ENCODE measurements at regions of chr14 and their contacts with region 1.

Region 1: GRCh38 chr14:21723431-21724045 is 49.9 kb upstream of the OR4E1 start:
- H3K4me3 ChIP-seq: no peak overlapping the region
- H3K27ac ChIP-seq: no peak overlapping the region
- H3K4me1 ChIP-seq: no peaks in the 10 kb centered on the region
- CTCF ChIP-seq: peak; percentile 43

Region 2: GRCh38 chr14:21643407-21643806 is 80.1 kb before region 1 on chr14:
- CTCF ChIA-PET with region 1: interaction called, 15 read pairs
- POLR2A ChIA-PET with region 1: no interaction called
- H3K4me3 ChIP-seq: no peak overlapping the region
- H3K27ac ChIP-seq: no peak overlapping the region
- H3K4me1 ChIP-seq: no peaks in the 10 kb centered on the region
- CTCF ChIP-seq: no peak

Region 3: DNA sequence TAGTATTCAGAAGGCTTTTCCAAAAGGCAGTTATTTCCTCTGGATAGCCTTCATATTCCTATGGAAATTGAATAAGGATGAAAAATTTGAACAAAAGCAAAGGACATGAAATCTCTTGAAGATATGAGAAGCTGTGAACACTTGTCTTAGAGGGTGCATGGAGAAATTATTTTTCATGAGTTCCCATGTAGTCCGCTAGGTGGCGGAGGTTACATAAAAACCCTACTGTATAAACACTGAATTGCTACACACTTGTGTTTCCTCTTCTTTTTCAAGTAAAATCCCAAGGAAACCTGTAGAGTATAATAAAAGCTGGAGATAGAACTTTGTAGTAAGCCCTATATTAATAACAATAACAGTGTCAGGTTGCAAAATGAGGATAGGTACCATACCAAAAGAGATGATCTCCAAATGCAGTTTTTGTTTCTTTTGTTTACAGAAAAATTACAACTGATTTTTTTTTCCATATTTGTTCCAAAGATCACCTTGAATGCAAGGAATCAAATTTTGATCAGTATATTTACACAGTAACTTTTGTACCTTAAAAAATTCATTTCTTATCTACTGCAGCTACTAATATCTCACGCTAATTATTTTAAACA is 12.1 kb before region 1 on chr14:
- CTCF ChIA-PET with region 1: interaction called, 23 read pairs
- POLR2A ChIA-PET with region 1: interaction called, 3 read pairs
- H3K4me3 ChIP-seq: no peak overlapping the region
- H3K27ac ChIP-seq: no peak overlapping the region
- H3K4me1 ChIP-seq: no peaks in the 10 kb centered on the region
- CTCF ChIP-seq: no peak

Region 4: DNA sequence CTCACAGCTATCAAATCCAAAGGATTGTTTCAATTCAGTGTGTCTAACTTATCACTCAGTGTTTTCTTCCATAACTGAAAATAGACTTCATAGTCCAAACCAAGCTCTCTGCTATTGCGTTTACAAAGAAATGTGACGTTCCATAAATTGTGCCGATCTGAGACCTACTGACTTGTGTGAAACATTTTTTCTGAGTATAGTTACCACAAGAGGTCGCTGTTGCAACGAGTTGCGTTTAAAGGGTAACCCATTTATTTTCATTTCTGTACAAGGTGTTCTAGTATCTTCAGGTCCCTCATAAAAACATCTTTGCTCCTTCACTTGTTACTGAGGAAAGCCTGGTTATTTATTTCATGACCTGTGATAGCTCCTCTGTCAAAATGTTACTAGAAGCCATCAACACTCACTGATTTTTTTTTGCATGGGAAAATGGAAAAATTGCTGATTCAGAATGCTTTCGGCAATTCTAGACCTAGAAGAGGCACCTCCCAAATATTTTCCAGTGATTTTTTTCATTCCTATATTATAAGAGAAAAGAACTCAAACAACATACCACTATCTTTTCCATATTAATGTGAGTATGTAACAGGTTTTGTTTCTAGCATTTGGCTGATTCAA is 11.0 kb after region 1 on chr14:
- CTCF ChIA-PET with region 1: interaction called, 76 read pairs
- POLR2A ChIA-PET with region 1: no interaction called
- H3K4me3 ChIP-seq: no peak overlapping the region
- H3K27ac ChIP-seq: no peak overlapping the region
- H3K4me1 ChIP-seq: no peaks in the 10 kb centered on the region
- CTCF ChIP-seq: no peak

Region 5: DNA sequence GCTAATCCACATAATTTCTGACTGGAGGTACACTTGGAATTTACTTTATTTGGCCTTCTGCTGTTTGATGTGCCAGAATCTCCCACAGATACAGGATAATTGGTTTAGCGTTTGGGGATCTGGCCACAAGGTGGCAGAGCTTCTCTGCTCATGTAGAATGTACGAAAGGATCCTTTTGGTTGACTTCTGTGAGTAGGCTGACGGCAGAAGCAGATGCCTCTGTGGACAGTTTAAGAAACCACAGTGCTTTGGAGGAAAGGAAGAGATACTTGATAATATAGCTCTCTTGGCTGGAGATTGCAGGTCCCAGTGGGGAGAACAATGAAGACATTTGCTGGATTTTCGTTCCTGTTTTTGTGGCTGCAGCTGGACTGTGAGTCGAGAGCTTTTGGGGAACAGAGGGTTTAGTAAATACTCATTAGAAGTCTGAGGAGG is 25.3 kb after region 1 on chr14:
- CTCF ChIA-PET with region 1: interaction called, 15 read pairs
- POLR2A ChIA-PET with region 1: interaction called, 3 read pairs
- H3K4me3 ChIP-seq: no peak overlapping the region
- H3K27ac ChIP-seq: no peak overlapping the region
- H3K4me1 ChIP-seq: no peaks in the 10 kb centered on the region
- CTCF ChIP-seq: peak; percentile 49

Region 6: DNA sequence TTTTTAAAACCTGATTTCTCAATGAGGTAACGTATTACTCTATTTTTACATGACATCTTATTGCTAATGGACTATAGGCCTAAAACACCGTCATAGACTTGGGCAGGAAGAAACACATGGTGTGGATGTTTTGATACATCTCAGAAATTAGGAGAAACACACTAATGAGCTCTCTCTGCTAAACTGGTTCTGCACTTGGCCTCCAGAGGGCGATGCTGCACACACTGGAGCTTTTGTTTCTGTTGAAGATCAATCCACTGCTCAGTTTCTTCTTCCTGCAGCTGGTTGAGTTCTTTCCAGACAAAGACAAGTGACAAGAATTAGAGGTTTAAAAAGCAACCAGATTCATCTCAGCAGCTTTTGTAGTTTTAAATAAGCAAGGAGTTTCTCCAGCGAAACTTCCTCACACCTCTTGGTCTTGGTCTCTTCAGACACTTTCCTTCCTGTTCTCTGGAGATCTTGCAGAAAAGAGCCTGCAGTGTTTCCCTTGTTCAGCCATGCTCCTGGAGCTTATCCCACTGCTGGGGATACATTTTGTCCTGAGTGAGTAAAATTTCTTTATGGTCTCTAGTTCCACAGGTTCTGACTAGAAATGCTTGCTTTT is 128.6 kb after region 1 on chr14:
- CTCF ChIA-PET with region 1: interaction called, 10 read pairs
- POLR2A ChIA-PET with region 1: no interaction called
- H3K4me3 ChIP-seq: no peak overlapping the region
- H3K27ac ChIP-seq: no peak overlapping the region
- H3K4me1 ChIP-seq: no peaks in the 10 kb centered on the region
- CTCF ChIP-seq: no peak